Astrocyte of the cerebellum (primary cell): ENCODE measurements at regions of chr15 and their contacts with region 1.

Region 1: DNA sequence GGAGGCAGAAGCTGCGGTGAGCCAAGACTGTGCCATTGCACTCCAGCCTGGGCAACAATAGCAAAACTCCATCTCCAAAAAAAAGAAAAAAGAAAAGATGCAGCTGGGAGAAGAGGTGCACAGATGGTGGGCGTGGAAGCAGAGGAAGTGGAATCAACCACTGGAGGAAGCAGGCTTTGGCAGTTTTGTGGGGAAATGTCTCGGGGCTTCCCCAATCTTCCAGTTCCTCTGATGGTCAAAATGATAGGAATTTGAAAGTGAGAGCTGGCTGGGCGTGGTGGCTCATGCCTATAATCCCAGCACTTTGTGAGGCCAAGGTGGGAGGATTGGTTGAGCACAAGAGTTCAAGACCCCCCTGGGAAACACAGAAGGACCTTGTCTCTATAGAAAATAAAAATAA is 48.1 kb upstream of the SMAD3 start:
- DNase-seq: no peak
- H3K4me3 ChIP-seq: no peak overlapping the region
- CTCF ChIP-seq: no peak

Region 2: GRCh38 chr15:66961407-66961884 is 55.9 kb before region 1 on chr15:
- in situ Hi-C with region 1: loop called (anchors 5 kb)
- DNase-seq: no peak
- H3K4me3 ChIP-seq: no peak overlapping the region
- CTCF ChIP-seq: no peak

Region 3: GRCh38 chr15:67066094-67066958 is 49.0 kb after region 1 on chr15:
- in situ Hi-C with region 1: no loop called
- DNase-seq: no peak
- H3K4me3 ChIP-seq: peak overlapping the region; percentile 99
- CTCF ChIP-seq: no peak